AG04450 (cell line): ENCODE measurements at regions of chr2 and their contacts with region 1.

Region 1: GRCh38 chr2:85266146-85267041 is 61.4 kb downstream of the TGOLN2 start:
- DNase-seq: no peak
- H3K4me3 ChIP-seq: no peak overlapping the region
- H3K27ac ChIP-seq: no peak overlapping the region
- H3K27me3 ChIP-seq: no peaks in the 10 kb centered on the region
- CTCF ChIP-seq: peak; percentile 82

Region 2: DNA sequence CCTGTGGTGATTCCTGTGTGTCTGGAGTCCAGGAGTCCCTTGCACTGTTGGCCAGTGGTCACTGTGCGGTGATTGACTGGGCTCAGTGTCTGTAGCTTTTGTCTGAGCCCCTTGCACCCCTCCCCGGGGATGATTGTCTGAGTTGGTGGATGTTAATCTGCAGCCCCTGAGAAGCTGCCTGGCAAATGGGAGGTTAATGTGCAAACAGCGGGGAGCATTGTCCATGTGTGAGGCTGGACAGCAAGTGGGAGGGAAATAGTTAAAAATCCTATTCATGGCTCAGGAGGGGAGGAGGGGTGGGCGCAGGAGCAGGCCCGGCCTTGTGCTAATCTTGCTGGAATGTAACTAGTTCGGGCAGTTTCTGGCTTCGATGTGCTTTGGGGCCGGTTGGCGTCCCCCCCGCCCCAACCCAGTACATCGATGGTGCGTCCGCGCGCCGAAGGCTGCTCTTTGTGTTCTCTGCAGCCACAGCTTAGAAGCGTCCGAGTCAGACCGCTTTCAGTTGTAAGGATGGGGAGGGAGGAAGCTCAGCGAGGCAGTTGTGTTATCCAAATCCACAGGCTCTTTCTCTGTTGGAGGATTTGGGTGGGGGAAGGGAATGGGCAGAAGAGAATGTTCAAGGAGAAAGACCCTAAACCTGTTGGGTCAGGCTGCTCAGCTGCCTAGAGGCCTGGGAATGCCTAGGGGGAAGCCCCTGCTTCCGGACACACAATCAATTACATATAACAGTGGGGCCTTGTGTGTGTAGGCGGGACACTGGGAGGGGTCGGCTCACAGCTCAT is 10.4 kb before region 1 on chr2:
- CTCF ChIA-PET with region 1: interaction called, 14 read pairs
- POLR2A ChIA-PET with region 1: interaction called, 3 read pairs
- DNase-seq: peak; percentile 54
- H3K4me3 ChIP-seq: peak overlapping the region; percentile 50
- H3K27ac ChIP-seq: peak overlapping the region; percentile 80
- H3K27me3 ChIP-seq: no peaks in the 10 kb centered on the region
- CTCF ChIP-seq: no peak